CD4-positive, alpha-beta T cell (primary cell): ENCODE measurements at regions of chr3 and their contacts with region 1.

Region 1: DNA sequence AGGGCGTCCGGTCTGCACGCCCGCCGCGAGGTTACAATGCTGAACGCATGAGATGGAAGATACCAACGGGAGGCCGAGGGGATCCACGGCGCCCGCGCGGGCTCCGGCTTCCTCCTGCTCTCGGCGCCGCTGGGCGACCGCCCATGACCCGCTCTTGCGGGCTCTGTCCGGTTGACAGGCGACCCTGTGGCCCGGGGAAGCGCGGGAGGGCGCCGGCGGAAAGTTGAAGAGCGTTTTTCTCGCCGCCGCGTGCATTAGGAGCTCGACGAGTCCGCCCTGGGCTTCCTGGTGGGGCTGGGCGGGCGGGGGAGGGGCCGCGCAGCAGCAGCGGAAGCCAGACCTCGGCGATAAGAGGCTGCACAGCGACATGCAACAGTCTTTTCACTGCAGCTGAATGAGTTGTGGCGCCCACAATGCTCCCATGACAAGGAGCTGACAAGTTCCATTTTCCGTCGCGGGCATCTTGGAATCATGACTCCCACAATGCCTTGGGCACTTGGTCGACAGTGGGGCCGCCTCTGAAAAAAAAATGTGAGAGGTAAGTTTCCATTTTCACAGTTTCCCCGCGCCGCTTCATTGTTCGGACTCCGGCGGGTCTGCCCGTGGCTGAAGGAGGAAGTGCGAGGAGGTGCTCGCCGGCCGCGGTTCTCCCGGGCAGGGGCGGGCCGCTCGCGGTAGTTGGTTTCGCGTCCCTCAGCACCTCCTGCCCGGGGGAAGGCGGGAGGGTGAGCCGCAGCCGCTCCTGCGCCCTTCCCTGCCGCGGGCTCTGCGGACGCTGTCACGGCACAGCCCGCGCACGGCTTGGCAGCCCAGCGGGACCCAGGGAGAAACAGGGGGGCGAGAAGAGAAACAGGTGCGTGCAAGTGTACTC is at the start of gene MBNL1:
- DNase-seq: peak; percentile 75 to 95 (median 82)
- ATAC-seq: peak; percentile 58
- H3K4me3 ChIP-seq: peak within 1 kb of the TSS; percentile 90
- H3K4me3 Mint-ChIP-seq: peak within 1 kb of the TSS; percentile 94
- H3K27ac ChIP-seq: peak within 1 kb of the TSS; percentile 90 to 100
- H3K27ac Mint-ChIP-seq: peak within 1 kb of the TSS; percentile 99
- H3K4me1 ChIP-seq: peaks cover 26% of the 10 kb centered on the region
- H3K4me1 Mint-ChIP-seq: peaks cover 67% of the 10 kb centered on the region
- H3K27me3 ChIP-seq: no peaks in the 10 kb centered on the region
- H3K27me3 Mint-ChIP-seq: no peaks in the 10 kb centered on the region
- CTCF ChIP-seq: no peak
- total RNA-seq, gene MBNL1: 551 to 561 TPM

Region 2: DNA sequence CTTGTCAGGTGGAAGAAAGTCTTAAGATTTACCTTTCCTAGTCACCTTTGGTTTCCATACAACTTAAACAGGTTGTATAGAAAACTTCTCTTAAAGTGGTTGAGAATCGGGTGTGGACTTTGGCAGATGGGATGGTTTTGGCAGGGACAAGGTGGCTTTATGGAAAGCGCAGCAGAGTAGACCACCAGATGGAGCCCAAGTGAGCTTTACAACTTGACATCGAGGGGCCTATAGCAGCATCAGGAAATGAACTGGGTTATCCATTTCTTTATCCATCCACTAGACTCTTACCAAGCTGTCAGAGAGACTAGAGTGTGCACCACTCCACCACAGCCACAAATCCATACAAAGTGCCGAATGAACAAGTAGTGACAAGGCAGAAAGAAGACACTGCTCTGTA is 85.3 kb before region 1 on chr3:
- CTCF ChIA-PET with region 1: interaction called, 14 read pairs
- POLR2A ChIA-PET with region 1: interaction called, 55 read pairs
- intact Hi-C with region 1: loop called in 1 of 2 experiments (anchors 5 kb)
- DNase-seq: peak in 13 of 14 experiments; percentile 31 to 80 (median 39)
- ATAC-seq: peak; percentile 91
- H3K4me3 ChIP-seq: no peak overlapping the region
- H3K4me3 Mint-ChIP-seq: peak overlapping the region; percentile 45
- H3K27ac ChIP-seq: no peak overlapping the region
- H3K27ac Mint-ChIP-seq: peak overlapping the region; percentile 6
- H3K4me1 ChIP-seq: peaks cover 11% of the 10 kb centered on the region
- H3K4me1 Mint-ChIP-seq: peaks cover 63% of the 10 kb centered on the region
- H3K27me3 ChIP-seq: no peaks in the 10 kb centered on the region
- H3K27me3 Mint-ChIP-seq: no peaks in the 10 kb centered on the region
- CTCF ChIP-seq: peak; percentile 86

Region 3: DNA sequence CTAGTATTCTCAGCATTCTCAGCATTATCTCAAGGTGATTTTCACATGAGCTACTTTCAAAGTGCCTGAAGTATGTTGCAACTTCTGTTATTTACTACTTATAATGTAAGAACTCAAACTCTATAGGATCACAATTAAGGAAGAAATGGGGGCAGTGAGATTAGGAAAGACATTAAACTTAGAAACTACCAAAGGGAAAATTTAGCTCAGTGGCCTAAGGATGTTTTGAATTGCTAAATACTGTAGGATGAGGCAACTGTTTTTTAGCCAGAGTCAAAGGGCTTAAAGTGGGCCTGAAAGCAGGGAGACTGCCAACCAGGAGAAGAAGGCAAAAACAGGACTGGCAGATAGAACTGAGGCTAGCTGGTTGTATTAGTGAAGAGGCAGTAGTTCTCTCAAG is 55.6 kb before region 1 on chr3:
- CTCF ChIA-PET with region 1: interaction called, 4 read pairs
- POLR2A ChIA-PET with region 1: interaction called, 20 read pairs
- intact Hi-C with region 1: no loop called
- DNase-seq: no peak
- ATAC-seq: no peak
- H3K4me3 ChIP-seq: no peak overlapping the region
- H3K4me3 Mint-ChIP-seq: no peak overlapping the region
- H3K27ac ChIP-seq: no peak overlapping the region
- H3K27ac Mint-ChIP-seq: peak overlapping the region; percentile 31
- H3K4me1 ChIP-seq: peaks cover 24% of the 10 kb centered on the region
- H3K4me1 Mint-ChIP-seq: peaks cover 71% of the 10 kb centered on the region
- H3K27me3 ChIP-seq: no peaks in the 10 kb centered on the region
- H3K27me3 Mint-ChIP-seq: no peaks in the 10 kb centered on the region
- CTCF ChIP-seq: no peak

Region 4: GRCh38 chr3:152241142-152242017 is 27.4 kb before region 1 on chr3:
- CTCF ChIA-PET with region 1: interaction called, 9 read pairs
- POLR2A ChIA-PET with region 1: interaction called, 294 read pairs
- intact Hi-C with region 1: loop called in 1 of 2 experiments (anchors 1 kb)
- DNase-seq: peak in 3 of 14 experiments; percentile 41 to 66 (median 45)
- ATAC-seq: no peak
- H3K4me3 ChIP-seq: no peak overlapping the region
- H3K4me3 Mint-ChIP-seq: peak overlapping the region; percentile 92
- H3K27ac ChIP-seq: peak overlapping the region; percentile 68 to 76
- H3K27ac Mint-ChIP-seq: peak overlapping the region; percentile 79
- H3K4me1 ChIP-seq: peaks cover 23% of the 10 kb centered on the region
- H3K4me1 Mint-ChIP-seq: peaks cover 78% of the 10 kb centered on the region
- H3K27me3 ChIP-seq: no peaks in the 10 kb centered on the region
- H3K27me3 Mint-ChIP-seq: no peaks in the 10 kb centered on the region
- CTCF ChIP-seq: no peak

Region 5: GRCh38 chr3:152291649-152292066 is 22.9 kb after region 1 on chr3:
- CTCF ChIA-PET with region 1: interaction called, 3 read pairs
- POLR2A ChIA-PET with region 1: interaction called, 21 read pairs
- intact Hi-C with region 1: no loop called
- DNase-seq: peak in 2 of 14 experiments; percentile 39 to 57
- ATAC-seq: peak; percentile 46
- H3K4me3 ChIP-seq: no peak overlapping the region
- H3K4me3 Mint-ChIP-seq: peak overlapping the region; percentile 40
- H3K27ac ChIP-seq: peak overlapping the region; percentile 35 to 49
- H3K27ac Mint-ChIP-seq: peak overlapping the region; percentile 82
- H3K4me1 ChIP-seq: peaks cover 43% of the 10 kb centered on the region
- H3K4me1 Mint-ChIP-seq: peaks cover 84% of the 10 kb centered on the region
- H3K27me3 ChIP-seq: no peaks in the 10 kb centered on the region
- H3K27me3 Mint-ChIP-seq: no peaks in the 10 kb centered on the region
- CTCF ChIP-seq: no peak

Region 6: GRCh38 chr3:152319831-152320617 is 51.2 kb after region 1 on chr3:
- CTCF ChIA-PET with region 1: interaction called, 5 read pairs
- POLR2A ChIA-PET with region 1: interaction called, 28 read pairs
- intact Hi-C with region 1: no loop called
- DNase-seq: peak in 1 of 14 experiments; percentile 32
- ATAC-seq: peak; percentile 13
- H3K4me3 ChIP-seq: no peak overlapping the region
- H3K4me3 Mint-ChIP-seq: peak overlapping the region; percentile 40
- H3K27ac ChIP-seq: peak overlapping the region in 1 of 2 donors; percentile 4
- H3K27ac Mint-ChIP-seq: peak overlapping the region; percentile 91
- H3K4me1 ChIP-seq: peaks cover 14% of the 10 kb centered on the region
- H3K4me1 Mint-ChIP-seq: peaks cover 93% of the 10 kb centered on the region
- H3K27me3 ChIP-seq: no peaks in the 10 kb centered on the region
- H3K27me3 Mint-ChIP-seq: no peaks in the 10 kb centered on the region
- CTCF ChIP-seq: no peak

Region 7: DNA sequence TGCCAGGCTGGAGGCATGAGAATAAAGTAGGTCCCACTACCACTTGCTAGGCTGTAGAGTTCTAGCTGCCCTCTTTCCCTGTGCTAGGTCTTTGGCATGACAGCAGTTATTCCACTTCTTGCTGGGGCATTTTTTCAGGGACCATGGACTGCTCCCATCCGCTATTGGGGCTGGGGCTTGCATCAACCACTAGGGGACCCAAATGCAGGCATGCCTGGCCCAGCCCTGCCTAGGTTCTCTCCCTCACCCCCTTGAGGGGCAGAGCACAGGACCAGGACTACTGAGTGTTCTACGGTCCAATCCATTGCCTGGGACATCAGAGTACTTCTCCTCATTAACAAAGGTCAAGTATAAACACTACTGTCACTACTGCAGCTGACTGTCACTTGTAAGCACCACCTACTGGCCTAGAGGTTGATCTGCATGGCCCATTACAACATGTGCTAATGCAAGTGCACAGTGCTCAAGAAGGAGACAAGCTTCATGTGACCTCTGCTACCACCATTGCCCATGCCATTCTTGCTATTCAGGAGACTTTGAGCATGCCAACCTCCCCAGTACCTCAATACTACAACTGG is 270.5 kb after region 1 on chr3:
- CTCF ChIA-PET with region 1: no interaction called
- POLR2A ChIA-PET with region 1: no interaction called
- intact Hi-C with region 1: no loop called
- DNase-seq: no peak
- ATAC-seq: no peak
- H3K4me3 ChIP-seq: no peak overlapping the region
- H3K4me3 Mint-ChIP-seq: no peak overlapping the region
- H3K27ac ChIP-seq: no peak overlapping the region
- H3K27ac Mint-ChIP-seq: no peak overlapping the region
- H3K4me1 ChIP-seq: no peaks in the 10 kb centered on the region
- H3K4me1 Mint-ChIP-seq: no peaks in the 10 kb centered on the region
- H3K27me3 ChIP-seq: peaks cover 0 to 10% of the 10 kb centered on the region in 2 experiments
- H3K27me3 Mint-ChIP-seq: peaks cover 48% of the 10 kb centered on the region
- CTCF ChIP-seq: no peak